PC-9 (cell line): ENCODE measurements at regions of chr1 and their contacts with region 1.

Region 1: GRCh38 chr1:52574594-52574993 is 21.7 kb upstream of the TUT4 start:
- DNase-seq: peak; percentile 31 to 93
- H3K4me3 ChIP-seq: no peak overlapping the region
- H3K27ac ChIP-seq: no peak overlapping the region
- H3K4me1 ChIP-seq: peaks cover 12% of the 10 kb centered on the region
- H3K27me3 ChIP-seq: no peaks in the 10 kb centered on the region
- CTCF ChIP-seq: no peak

Region 2: GRCh38 chr1:52632732-52633290 is 58.2 kb after region 1 on chr1 and contains the start of gene SHISAL2A:
- CTCF ChIA-PET with region 1: no interaction called
- POLR2A ChIA-PET with region 1: no interaction called
- intact Hi-C with region 1: loop called (anchors 5 kb)
- DNase-seq: peak in 1 of 2 experiments; percentile 12
- H3K4me3 ChIP-seq: no peak within 1 kb of the TSS
- H3K27ac ChIP-seq: no peak within 1 kb of the TSS
- H3K4me1 ChIP-seq: peaks cover 9% of the 10 kb centered on the region
- H3K27me3 ChIP-seq: no peaks in the 10 kb centered on the region
- CTCF ChIP-seq: no peak
- total RNA-seq, gene SHISAL2A: not detected in 2 replicates